ENCODE measurements at regions of chr12 and their contacts with region 1.

Region 1: DNA sequence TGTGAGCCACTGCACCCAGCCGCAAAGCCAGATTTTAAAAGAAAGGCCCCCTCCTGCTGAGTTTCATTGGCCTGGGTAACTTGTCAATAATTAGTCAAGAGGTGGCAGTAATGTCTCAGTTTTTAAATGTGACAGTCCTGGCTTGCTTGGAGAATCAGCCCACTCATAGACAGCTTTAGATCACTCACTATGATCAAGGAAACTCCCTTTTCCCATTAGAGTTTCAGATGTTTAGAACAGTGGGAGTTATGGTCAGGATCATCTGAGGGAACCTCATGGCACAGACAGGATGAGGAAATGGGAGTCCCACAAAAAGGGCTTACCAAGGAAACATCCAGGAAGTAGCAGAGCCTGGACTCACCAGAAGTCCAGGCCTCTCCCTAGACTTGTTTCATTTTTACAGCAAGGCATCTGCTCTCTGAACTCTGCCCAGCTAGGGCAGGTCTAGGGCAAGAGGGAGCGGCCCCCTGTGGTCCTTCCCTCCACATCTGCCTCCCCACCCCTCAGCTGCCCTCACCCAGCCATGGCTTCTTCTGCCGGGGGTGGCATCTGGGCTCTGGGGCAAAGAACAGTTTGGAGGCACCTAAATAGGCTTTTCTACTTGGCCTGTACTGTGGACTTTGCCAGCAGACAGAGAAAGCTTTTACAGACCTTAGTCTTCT is 11.2 kb downstream of the BCL2L14 start:
- DNase-seq: peak; percentile 39
- ATAC-seq: peak; percentile 96
- H3K4me3 ChIP-seq: no peak overlapping the region
- H3K27ac ChIP-seq: no peak overlapping the region
- H3K4me1 ChIP-seq: no peaks in the 10 kb centered on the region
- H3K27me3 ChIP-seq: no peaks in the 10 kb centered on the region
- CTCF ChIP-seq: peak; percentile 33 to 54 (median 34); a peak in 4 of 6 replicates
- EP300 ChIP-seq: no peak
- POLR2A ChIP-seq: no peak
- RAD21 ChIP-seq: peak; percentile 80

Region 2: GRCh38 chr12:11862798-11863197 is 219.2 kb before region 1 on chr12:
- CTCF ChIA-PET with region 1: no interaction called
- POLR2A ChIA-PET with region 1: no interaction called
- RAD21 ChIA-PET with region 1: no interaction called
- SMC1A ChIA-PET with region 1: no interaction called
- in situ Hi-C with region 1: no loop called
- intact Hi-C with region 1: no loop called
- DNase-seq: no peak
- ATAC-seq: peak; percentile 48
- H3K4me3 ChIP-seq: no peak overlapping the region
- H3K27ac ChIP-seq: no peak overlapping the region
- H3K4me1 ChIP-seq: no peaks in the 10 kb centered on the region; the same call in 1 of the 2 replicates
- H3K27me3 ChIP-seq: no peaks in the 10 kb centered on the region
- CTCF ChIP-seq: no peak
- EP300 ChIP-seq: no peak
- POLR2A ChIP-seq: no peak
- RAD21 ChIP-seq: no peak

Region 3: GRCh38 chr12:12070674-12071656 is 11.0 kb before region 1 on chr12 and contains the start of gene BCL2L14:
- CTCF ChIA-PET with region 1: interaction called, 12 read pairs
- POLR2A ChIA-PET with region 1: interaction called, 4 read pairs
- RAD21 ChIA-PET with region 1: interaction called, 9 read pairs
- SMC1A ChIA-PET with region 1: interaction called, 6 read pairs
- in situ Hi-C with region 1: no loop called
- intact Hi-C with region 1: no loop called
- DNase-seq: peak; percentile 36
- ATAC-seq: peak; percentile 86
- H3K4me3 ChIP-seq: peak within 1 kb of the TSS; percentile 72
- H3K27ac ChIP-seq: peak within 1 kb of the TSS; percentile 70
- H3K4me1 ChIP-seq: peaks cover 7% of the 10 kb centered on the region
- H3K27me3 ChIP-seq: no peaks in the 10 kb centered on the region
- CTCF ChIP-seq: no peak; a peak in 1 of 6 replicates
- EP300 ChIP-seq: no peak
- POLR2A ChIP-seq: no peak
- RAD21 ChIP-seq: no peak
- polyA plus RNA-seq, gene BCL2L14: 0.62 to 0.64 TPM

Region 4: DNA sequence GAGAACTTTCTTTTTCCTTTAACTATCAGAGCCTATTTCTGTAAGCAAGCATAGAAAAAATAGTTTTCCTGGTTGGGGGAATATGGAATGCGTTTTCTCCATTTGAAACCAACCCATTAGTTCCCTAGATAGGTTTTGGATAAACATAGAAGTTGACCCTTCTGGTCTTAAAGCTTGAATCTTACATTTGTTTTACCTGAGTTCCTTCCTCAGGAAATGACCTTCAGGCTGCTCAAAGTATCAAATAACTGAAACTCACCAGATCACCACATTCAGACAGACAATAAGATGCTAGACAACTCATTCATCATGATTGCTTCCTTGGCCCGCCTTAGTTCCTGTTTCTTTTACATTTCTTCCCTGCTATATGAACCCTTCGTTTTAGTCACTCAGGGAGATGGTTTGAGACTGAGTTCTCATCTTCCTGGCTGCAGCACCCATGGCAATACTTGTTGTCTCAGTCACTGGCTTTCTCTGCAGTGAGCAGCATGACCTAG is 132.7 kb after region 1 on chr12:
- CTCF ChIA-PET with region 1: no interaction called
- POLR2A ChIA-PET with region 1: no interaction called
- RAD21 ChIA-PET with region 1: no interaction called
- SMC1A ChIA-PET with region 1: no interaction called
- in situ Hi-C with region 1: no loop called
- intact Hi-C with region 1: no loop called
- DNase-seq: peak; percentile 35
- ATAC-seq: peak; percentile 73
- H3K4me3 ChIP-seq: no peak overlapping the region
- H3K27ac ChIP-seq: no peak overlapping the region
- H3K4me1 ChIP-seq: peaks cover 6% of the 10 kb centered on the region
- H3K27me3 ChIP-seq: no peaks in the 10 kb centered on the region
- CTCF ChIP-seq: no peak
- EP300 ChIP-seq: no peak
- POLR2A ChIP-seq: no peak
- RAD21 ChIP-seq: no peak

Measured in GM12878 (cell line).